PC-9 (cell line): ENCODE measurements at regions of chr20 and their contacts with region 1.

Region 1: DNA sequence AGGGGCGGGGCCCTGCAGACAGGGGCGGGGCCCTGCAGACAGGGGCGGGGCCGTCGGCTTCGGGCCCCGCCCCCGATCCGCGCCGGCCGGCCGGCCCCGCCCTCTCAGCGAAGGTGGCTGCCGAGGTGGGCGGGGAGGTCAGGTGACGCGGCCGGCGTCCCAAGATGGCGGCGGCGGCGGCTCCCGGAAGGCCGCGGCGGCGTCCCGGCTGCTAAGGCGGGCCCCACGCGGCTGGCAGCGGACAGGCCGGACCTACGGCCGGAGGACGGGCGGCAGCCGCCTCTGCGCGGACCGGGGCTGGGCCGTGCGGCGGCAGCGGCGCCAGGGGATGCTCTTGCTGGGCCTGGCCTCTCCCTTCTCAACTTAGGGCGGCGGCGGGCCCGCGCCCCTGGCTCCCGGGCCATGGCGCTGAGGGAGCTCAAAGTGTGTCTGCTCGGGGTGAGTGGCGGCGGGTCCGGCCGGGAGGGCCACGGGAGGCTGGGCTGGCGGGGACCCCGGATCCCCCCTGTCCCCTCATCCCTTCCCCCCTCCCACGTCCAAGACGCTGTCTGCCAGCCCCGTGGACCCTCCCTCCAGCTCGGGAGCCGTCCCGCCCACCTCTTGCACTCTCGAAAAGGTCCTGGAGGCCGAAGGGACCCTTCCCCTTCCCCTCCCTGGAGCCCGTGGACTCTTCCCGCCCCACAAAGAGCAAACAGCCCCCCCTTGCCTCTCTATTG is at the start of gene RAB22A:
- DNase-seq: peak; percentile 55 to 83
- H3K4me3 ChIP-seq: peak within 1 kb of the TSS; percentile 94
- H3K27ac ChIP-seq: peak within 1 kb of the TSS; percentile 49
- H3K4me1 ChIP-seq: peaks cover 13% of the 10 kb centered on the region
- H3K27me3 ChIP-seq: no peaks in the 10 kb centered on the region
- CTCF ChIP-seq: no peak
- total RNA-seq, gene RAB22A: 22.6 and 28.9 TPM in 2 replicates

Region 2: DNA sequence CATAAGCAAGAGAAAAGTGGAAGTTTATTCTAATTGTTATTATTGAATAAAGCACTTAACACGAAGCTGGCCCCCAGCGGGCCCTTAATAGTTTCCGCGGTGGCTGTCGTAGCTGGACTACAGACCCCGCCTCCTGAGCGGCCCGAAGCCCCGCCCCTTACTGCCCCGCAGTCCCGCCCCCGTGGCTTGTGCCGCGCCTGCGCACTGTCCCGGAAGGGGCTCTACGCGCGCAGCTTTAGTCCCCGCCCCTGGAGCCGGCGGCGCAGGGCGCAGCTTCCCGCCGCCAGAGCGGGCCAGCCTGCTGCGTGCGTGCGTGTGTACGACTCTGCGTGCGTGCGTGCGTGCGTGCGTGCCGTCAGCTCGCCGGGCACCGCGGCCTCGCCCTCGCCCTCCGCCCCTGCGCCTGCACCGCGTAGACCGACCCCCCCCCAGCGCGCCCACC is 79.2 kb after region 1 on chr20 and contains the start of gene VAPB:
- CTCF ChIA-PET with region 1: no interaction called
- POLR2A ChIA-PET with region 1: interaction called, 3 read pairs
- intact Hi-C with region 1: loop called (anchors 1 kb)
- DNase-seq: peak; percentile 85 to 98
- H3K4me3 ChIP-seq: peak within 1 kb of the TSS; percentile 61
- H3K27ac ChIP-seq: peak within 1 kb of the TSS; percentile 67
- H3K4me1 ChIP-seq: peaks cover 18% of the 10 kb centered on the region
- H3K27me3 ChIP-seq: no peaks in the 10 kb centered on the region
- CTCF ChIP-seq: no peak
- total RNA-seq, gene VAPB: 73.0 and 80.6 TPM in 2 replicates